ENCODE measurements at regions of chr1 and their contacts with region 1.

Region 1: DNA sequence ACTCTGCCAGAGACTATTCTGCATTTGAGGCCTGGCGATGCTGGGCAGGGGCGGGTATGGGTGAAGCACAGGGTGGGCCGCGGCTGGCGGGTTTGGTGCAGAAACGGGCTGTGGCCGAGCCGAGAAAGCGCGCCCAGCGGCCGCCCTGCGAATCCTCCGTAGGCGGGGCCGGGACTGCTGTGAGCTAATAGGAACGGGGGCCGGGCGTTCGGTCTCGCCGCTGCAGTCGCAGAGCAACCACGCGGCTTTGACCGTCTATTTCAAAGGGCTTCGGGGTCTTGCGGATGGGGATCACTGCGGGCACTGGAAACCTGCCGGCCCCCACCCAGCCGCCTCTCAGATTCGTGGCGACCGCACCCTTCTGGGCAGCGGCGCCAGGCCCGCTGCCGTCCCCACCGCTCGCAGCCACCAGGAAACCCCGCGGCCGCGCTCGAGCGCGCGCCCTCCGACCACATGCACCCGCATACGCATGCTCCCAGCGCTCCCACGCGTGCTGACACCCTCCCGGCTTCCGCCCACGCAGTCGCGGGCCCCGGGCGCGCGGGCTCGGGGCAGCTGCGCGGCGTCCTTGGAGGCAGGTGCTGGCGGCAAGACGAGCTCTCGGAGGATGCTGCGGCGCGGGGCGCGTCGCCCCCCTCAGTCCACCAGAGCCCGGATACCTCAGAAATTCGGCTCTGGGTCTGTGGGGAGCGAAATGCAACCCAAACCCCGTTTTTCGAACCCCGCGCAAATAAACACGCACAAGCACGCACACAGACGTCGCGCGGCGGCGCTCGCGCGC is 32.6 kb downstream of the DNTTIP2 start:
- DNase-seq: peak; percentile 80
- H3K4me3 Mint-ChIP-seq: peak overlapping the region; percentile 85
- H3K27ac Mint-ChIP-seq: peak overlapping the region; percentile 90
- H3K4me1 Mint-ChIP-seq: peaks cover 30% of the 10 kb centered on the region
- H3K27me3 Mint-ChIP-seq: peaks cover 2% of the 10 kb centered on the region

Region 2: GRCh38 chr1:92577261-92577895 is 1269.0 kb before region 1 on chr1:
- intact Hi-C with region 1: loop called (anchors 2 kb)
- DNase-seq: no peak
- H3K4me3 Mint-ChIP-seq: peak overlapping the region; percentile 89
- H3K27ac Mint-ChIP-seq: peak overlapping the region; percentile 75
- H3K4me1 Mint-ChIP-seq: peaks cover 81% of the 10 kb centered on the region
- H3K27me3 Mint-ChIP-seq: no peaks in the 10 kb centered on the region

Region 3: DNA sequence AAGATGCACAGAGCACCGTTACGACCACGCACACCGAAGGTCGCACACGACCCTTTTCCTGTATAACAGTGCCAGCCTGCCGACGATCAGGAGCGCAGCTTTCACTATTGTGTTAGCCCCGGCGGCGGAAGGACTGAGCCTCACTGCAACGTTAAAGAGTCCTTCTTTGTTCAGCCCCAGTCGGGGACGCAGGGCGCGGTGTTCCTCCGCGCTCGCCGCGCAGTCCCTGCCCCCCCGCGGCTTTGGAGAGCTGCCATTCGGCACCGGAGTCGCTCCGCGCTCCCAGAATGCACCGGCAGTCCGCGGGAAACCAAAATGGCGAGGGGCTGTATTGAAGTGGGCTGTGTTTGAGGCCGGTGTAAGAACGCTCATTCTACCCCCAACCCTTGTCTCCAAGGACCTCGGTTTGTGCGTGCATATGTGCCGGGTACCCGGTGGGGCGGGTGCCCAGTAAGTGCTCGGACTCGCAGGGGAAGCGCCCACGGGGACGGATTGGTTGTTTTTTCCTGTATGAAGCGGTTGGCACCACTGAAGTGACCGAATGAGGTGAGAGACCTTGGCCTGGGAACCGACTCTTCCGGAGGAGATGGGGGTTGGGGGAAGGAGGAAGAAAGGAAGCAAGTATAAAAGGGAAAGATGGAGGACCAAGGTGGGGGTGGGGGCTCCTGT is 767.3 kb before region 1 on chr1 and contains the start of gene MTF2:
- intact Hi-C with region 1: loop called (anchors 2 kb)
- DNase-seq: peak; percentile 93
- H3K4me3 Mint-ChIP-seq: peak within 1 kb of the TSS; percentile 98
- H3K27ac Mint-ChIP-seq: peak within 1 kb of the TSS; percentile 95
- H3K4me1 Mint-ChIP-seq: peaks cover 58% of the 10 kb centered on the region
- H3K27me3 Mint-ChIP-seq: no peaks in the 10 kb centered on the region
- total RNA-seq, gene MTF2: 68.4 and 71.0 TPM in 2 replicates

Region 4: DNA sequence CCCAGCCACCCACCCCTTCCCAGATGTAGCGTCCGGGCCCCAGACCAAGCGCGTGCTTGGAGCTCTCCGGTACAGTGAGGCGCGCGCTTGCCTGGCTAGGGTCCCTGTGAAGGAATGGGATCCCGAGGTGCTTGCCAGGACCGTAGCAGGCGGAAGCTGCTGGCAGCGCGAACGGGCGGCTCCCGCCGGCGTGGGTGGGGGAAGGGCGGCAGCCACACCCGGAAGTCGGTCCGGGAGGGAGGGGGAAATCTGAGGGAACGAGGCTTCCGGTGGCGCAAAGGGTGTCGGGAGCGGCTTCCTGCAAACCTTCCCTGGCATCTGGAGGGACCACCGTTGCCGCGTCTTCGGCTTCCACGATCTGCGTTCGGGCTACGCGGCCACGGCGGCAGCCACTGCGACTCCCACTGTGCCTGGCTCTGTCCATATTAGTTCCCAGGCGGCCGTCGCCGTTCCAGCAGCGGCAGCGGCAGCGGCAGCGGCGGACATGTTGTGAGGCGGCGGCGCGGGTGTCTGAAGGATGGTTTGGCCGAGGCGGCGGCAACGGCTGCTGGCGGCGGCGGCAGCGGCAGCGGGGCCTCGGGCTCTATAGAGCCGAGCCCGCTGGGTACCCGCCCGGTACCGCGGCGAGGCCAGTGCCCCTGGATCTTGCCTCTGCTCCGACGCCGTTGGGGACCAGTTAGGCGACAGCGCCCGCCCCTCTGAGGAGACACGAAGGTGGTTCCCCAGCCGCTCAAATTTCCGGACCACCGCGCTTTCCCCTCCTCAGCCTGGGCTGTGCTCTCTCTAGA is 500.6 kb before region 1 on chr1 and contains the start of gene DR1:
- intact Hi-C with region 1: loop called (anchors 1 kb)
- DNase-seq: peak; percentile 90
- H3K4me3 Mint-ChIP-seq: peak within 1 kb of the TSS; percentile 100
- H3K27ac Mint-ChIP-seq: peak within 1 kb of the TSS; percentile 99
- H3K4me1 Mint-ChIP-seq: peaks cover 36% of the 10 kb centered on the region
- H3K27me3 Mint-ChIP-seq: no peaks in the 10 kb centered on the region
- total RNA-seq, gene DR1: 101 and 106 TPM in 2 replicates

Region 5: GRCh38 chr1:93629099-93630059 is 217.0 kb before region 1 on chr1:
- intact Hi-C with region 1: loop called (anchors 1 kb)
- DNase-seq: peak; percentile 24
- H3K4me3 Mint-ChIP-seq: no peak overlapping the region
- H3K27ac Mint-ChIP-seq: no peak overlapping the region
- H3K4me1 Mint-ChIP-seq: no peaks in the 10 kb centered on the region
- H3K27me3 Mint-ChIP-seq: peaks cover 7% of the 10 kb centered on the region

Region 6: GRCh38 chr1:93814059-93814794 is 32.2 kb before region 1 on chr1:
- intact Hi-C with region 1: loop called (anchors 2 kb)
- DNase-seq: peak; percentile 31
- H3K4me3 Mint-ChIP-seq: no peak overlapping the region
- H3K27ac Mint-ChIP-seq: no peak overlapping the region
- H3K4me1 Mint-ChIP-seq: peaks cover 15% of the 10 kb centered on the region
- H3K27me3 Mint-ChIP-seq: no peaks in the 10 kb centered on the region

Region 7: GRCh38 chr1:93964777-93965200 is 118.4 kb after region 1 on chr1:
- intact Hi-C with region 1: no loop called
- DNase-seq: no peak
- H3K4me3 Mint-ChIP-seq: no peak overlapping the region
- H3K27ac Mint-ChIP-seq: no peak overlapping the region
- H3K4me1 Mint-ChIP-seq: no peaks in the 10 kb centered on the region
- H3K27me3 Mint-ChIP-seq: no peaks in the 10 kb centered on the region

Region 8: GRCh38 chr1:94417978-94418663 is 571.7 kb after region 1 on chr1 and contains the start of gene ABCD3:
- intact Hi-C with region 1: loop called (anchors 1 kb)
- DNase-seq: peak; percentile 96
- H3K4me3 Mint-ChIP-seq: peak within 1 kb of the TSS; percentile 89
- H3K27ac Mint-ChIP-seq: peak within 1 kb of the TSS; percentile 68
- H3K4me1 Mint-ChIP-seq: peaks cover 31% of the 10 kb centered on the region
- H3K27me3 Mint-ChIP-seq: peaks cover 15% of the 10 kb centered on the region
- total RNA-seq, gene ABCD3: 25.7 and 28.2 TPM in 2 replicates